ENCODE measurements at regions of chr9 and their contacts with region 1.

Region 1: GRCh38 chr9:107044872-107045271 is 181.9 kb downstream of the ZNF462 start:
- DNase-seq: peak; percentile 12
- H3K4me3 ChIP-seq: no peak overlapping the region
- H3K27ac ChIP-seq: no peak overlapping the region
- H3K4me1 ChIP-seq: no peaks in the 10 kb centered on the region
- H3K27me3 ChIP-seq: no peaks in the 10 kb centered on the region
- CTCF ChIP-seq: peak in 1 of 5 experiments; percentile 15
- EP300 ChIP-seq: no peak
- POLR2A ChIP-seq: no peak

Region 2: GRCh38 chr9:108809269-108809668 is 1764.4 kb after region 1 on chr9:
- in situ Hi-C with region 1: no loop called
- intact Hi-C with region 1: loop called (anchors 5 kb)
- DNase-seq: no peak
- H3K4me3 ChIP-seq: no peak overlapping the region
- H3K27ac ChIP-seq: no peak overlapping the region
- H3K4me1 ChIP-seq: no peaks in the 10 kb centered on the region
- H3K27me3 ChIP-seq: no peaks in the 10 kb centered on the region
- CTCF ChIP-seq: no peak
- EP300 ChIP-seq: no peak
- POLR2A ChIP-seq: no peak

Measured in transverse colon (tissue), 4 donors.